H1 (cell line): ENCODE measurements at regions of chr14 and their contacts with region 1.

Region 1: GRCh38 chr14:74571901-74572725 is 39.9 kb downstream of the LTBP2 start:
- DNase-seq: no peak
- H3K4me3 ChIP-seq: no peak overlapping the region
- H3K27ac ChIP-seq: no peak overlapping the region
- H3K4me1 ChIP-seq: peaks cover 0 to 7% (median 5%) of the 10 kb centered on the region in 4 experiments; a peak in 5 of 7 replicates
- H3K27me3 ChIP-seq: no peaks in the 10 kb centered on the region
- CTCF ChIP-seq: no peak
- EP300 ChIP-seq: no peak
- POLR2A ChIP-seq: no peak
- RAD21 ChIP-seq: no peak

Region 2: GRCh38 chr14:74456684-74457564 is 115.2 kb before region 1 on chr14:
- CTCF ChIA-PET with region 1: no interaction called
- POLR2A ChIA-PET with region 1: no interaction called
- DNase-seq: no peak
- H3K4me3 ChIP-seq: no peak overlapping the region
- H3K27ac ChIP-seq: no peak overlapping the region
- H3K4me1 ChIP-seq: peaks cover 0 to 3% (median 2%) of the 10 kb centered on the region in 4 experiments; a peak in 5 of 7 replicates
- H3K27me3 ChIP-seq: no peaks in the 10 kb centered on the region
- CTCF ChIP-seq: no peak
- EP300 ChIP-seq: no peak
- POLR2A ChIP-seq: no peak
- RAD21 ChIP-seq: no peak

Region 3: DNA sequence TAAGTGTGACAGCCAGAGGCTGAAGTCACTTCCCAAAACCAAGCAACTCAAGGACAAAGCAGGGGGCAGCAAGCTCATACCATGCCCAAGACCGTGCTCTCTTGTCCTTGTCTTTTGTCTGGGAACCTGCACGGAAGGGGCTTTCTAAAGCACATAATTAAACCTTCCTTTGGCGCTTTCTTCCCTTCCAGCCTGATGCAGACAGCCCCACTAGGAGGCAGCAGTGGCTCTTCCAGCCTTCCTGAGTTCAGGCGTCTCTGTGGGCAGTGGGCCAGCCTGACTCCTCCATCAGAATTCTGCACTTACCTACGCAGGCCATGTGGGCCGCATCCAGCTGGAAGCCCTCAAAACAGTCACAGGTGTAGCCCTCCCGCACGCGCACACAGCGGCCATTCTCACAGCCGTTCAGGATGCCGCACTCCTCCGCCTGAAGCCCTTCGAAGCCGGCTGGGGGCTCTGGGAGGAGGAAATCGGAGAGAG is 70.9 kb before region 1 on chr14:
- CTCF ChIA-PET with region 1: interaction called, 18 read pairs
- POLR2A ChIA-PET with region 1: no interaction called
- DNase-seq: peak; percentile 56 to 77
- H3K4me3 ChIP-seq: peak overlapping the region in 3 of 4 experiments; percentile 10 to 32 (median 15); a peak in 4 of 8 replicates
- H3K27ac ChIP-seq: peak overlapping the region; percentile 84
- H3K4me1 ChIP-seq: peaks cover 4 to 19% (median 16%) of the 10 kb centered on the region in 4 experiments
- H3K27me3 ChIP-seq: no peaks in the 10 kb centered on the region
- CTCF ChIP-seq: peak in 2 of 3 experiments; percentile 88 to 94; a peak in 3 of 4 replicates
- EP300 ChIP-seq: no peak
- POLR2A ChIP-seq: no peak
- RAD21 ChIP-seq: peak; percentile 76 to 85

Region 4: GRCh38 chr14:74525361-74525851 is 46.7 kb before region 1 on chr14:
- CTCF ChIA-PET with region 1: interaction called, 24 read pairs
- POLR2A ChIA-PET with region 1: no interaction called
- DNase-seq: no peak
- H3K4me3 ChIP-seq: no peak overlapping the region
- H3K27ac ChIP-seq: no peak overlapping the region
- H3K4me1 ChIP-seq: peaks cover 0 to 6% (median 3%) of the 10 kb centered on the region in 4 experiments; a peak in 2 of 7 replicates
- H3K27me3 ChIP-seq: no peaks in the 10 kb centered on the region
- CTCF ChIP-seq: no peak
- EP300 ChIP-seq: no peak
- POLR2A ChIP-seq: no peak
- RAD21 ChIP-seq: no peak

Region 5: GRCh38 chr14:74583689-74584434 is 11.7 kb after region 1 on chr14:
- CTCF ChIA-PET with region 1: interaction called, 51 read pairs
- POLR2A ChIA-PET with region 1: no interaction called
- DNase-seq: no peak
- H3K4me3 ChIP-seq: no peak overlapping the region
- H3K27ac ChIP-seq: no peak overlapping the region
- H3K4me1 ChIP-seq: 0 out of 7 replicates have a peak, but pooled peaks cover 0 to 2% (median 0%) of the 10 kb centered on the region in 4 experiments
- H3K27me3 ChIP-seq: no peaks in the 10 kb centered on the region
- CTCF ChIP-seq: no peak
- EP300 ChIP-seq: no peak
- POLR2A ChIP-seq: no peak
- RAD21 ChIP-seq: no peak

Region 6: DNA sequence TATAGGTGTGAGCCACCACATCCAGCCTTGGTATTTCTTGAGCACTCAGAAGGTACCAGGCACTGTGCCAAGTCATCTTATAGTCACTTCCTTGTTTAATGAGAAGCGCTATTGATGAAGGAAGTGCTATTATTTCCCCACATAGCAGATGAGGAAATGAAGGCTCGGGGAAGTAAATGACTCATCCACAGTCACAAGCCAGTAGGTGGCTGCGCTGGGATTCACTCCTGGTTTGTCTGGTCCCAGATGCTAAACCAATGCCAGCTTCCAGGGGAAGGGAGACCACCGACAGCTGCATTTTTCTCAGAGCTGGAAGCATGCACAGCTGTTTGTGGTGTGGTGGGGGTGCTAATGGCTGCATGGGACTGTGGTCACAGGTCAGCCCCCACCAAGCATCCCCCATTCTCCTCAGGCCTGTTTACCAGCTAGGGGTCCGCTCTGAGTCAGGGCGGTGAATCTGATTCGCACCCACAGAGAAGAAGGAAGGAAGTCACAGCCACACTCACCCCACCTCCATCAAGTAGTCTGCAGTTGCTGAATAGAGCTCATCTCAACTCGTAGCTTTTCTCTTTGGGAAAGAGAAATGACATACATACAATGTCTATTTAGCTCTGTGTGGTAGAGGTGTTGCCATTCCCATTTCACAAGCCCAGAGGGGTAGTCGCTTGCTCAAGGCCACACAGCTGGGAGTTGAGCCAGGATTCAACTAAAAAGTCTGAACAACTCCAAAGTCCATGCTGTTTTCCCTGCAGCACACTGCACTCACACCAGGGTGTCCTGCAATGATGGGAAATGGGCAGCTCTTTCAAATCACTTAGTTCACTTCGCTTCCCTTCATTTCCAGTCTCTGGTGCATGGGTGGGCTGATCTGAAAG is 46.2 kb after region 1 on chr14:
- CTCF ChIA-PET with region 1: interaction called, 18 read pairs
- POLR2A ChIA-PET with region 1: no interaction called
- DNase-seq: no peak
- H3K4me3 ChIP-seq: no peak overlapping the region
- H3K27ac ChIP-seq: no peak overlapping the region
- H3K4me1 ChIP-seq: peaks cover 2 to 5% (median 4%) of the 10 kb centered on the region in 4 experiments; a peak in 4 of 7 replicates
- H3K27me3 ChIP-seq: no peaks in the 10 kb centered on the region; a peak in 2 of 7 replicates
- CTCF ChIP-seq: no peak
- EP300 ChIP-seq: no peak
- POLR2A ChIP-seq: no peak
- RAD21 ChIP-seq: no peak